GM12878 (cell line): ENCODE measurements at regions of chr2 and their contacts with region 1.

Region 1: DNA sequence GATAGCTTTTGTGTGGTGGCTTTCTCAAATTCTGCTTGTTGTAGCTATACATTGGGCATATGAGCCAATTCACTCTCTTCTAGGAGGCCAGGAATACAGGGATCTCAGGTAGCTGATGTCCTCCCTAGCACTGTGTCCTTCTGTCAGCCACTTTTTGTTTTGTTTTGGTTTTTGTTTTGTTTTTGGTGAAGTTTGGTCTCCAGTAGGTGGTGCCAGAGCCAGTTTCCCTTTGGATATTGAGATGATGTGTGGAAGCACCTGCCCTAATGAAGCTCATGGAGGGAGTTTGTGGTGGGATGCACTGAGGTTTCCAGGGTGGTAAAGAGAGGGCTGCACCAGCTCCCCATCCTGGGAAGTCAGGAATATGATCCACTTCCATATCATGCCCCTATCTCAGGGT is 100.5 kb upstream of the VWC2L start:
- DNase-seq: no peak
- ATAC-seq: peak; percentile 75
- H3K4me3 ChIP-seq: no peak overlapping the region
- H3K27ac ChIP-seq: no peak overlapping the region
- H3K4me1 ChIP-seq: no peaks in the 10 kb centered on the region; the same call in 1 of the 2 replicates
- H3K27me3 ChIP-seq: no peaks in the 10 kb centered on the region
- CTCF ChIP-seq: peak; percentile 33 to 45 (median 35); a peak in 5 of 6 replicates
- EP300 ChIP-seq: no peak
- POLR2A ChIP-seq: no peak
- RAD21 ChIP-seq: peak; percentile 52

Region 2: GRCh38 chr2:215002500-215002899 is 692.2 kb after region 1 on chr2:
- CTCF ChIA-PET with region 1: interaction called, 5 read pairs
- POLR2A ChIA-PET with region 1: no interaction called
- RAD21 ChIA-PET with region 1: no interaction called
- SMC1A ChIA-PET with region 1: no interaction called
- in situ Hi-C with region 1: no loop called
- intact Hi-C with region 1: loop called (anchors 10 kb)
- DNase-seq: no peak
- ATAC-seq: peak; percentile 84
- H3K4me3 ChIP-seq: no peak overlapping the region
- H3K27ac ChIP-seq: no peak overlapping the region
- H3K4me1 ChIP-seq: no peaks in the 10 kb centered on the region
- H3K27me3 ChIP-seq: no peaks in the 10 kb centered on the region
- CTCF ChIP-seq: peak; percentile 39 to 71 (median 43); a peak in 5 of 6 replicates
- EP300 ChIP-seq: no peak
- POLR2A ChIP-seq: no peak
- RAD21 ChIP-seq: peak; percentile 55